Activated naive CD4-positive, alpha-beta T cell treated with anti-CD3 and anti-CD28 coated beads, Interleukin-2, amount 10 ng/mL, durations not matched to agents 7 days and 5 days (primary cell): ENCODE measurements at regions of chr2 and their contacts with region 1.

Region 1: GRCh38 chr2:42095923-42096408 is 48.1 kb downstream of the PKDCC start:
- DNase-seq: peak; percentile 85
- H3K4me3 Mint-ChIP-seq: no peak overlapping the region
- H3K27ac Mint-ChIP-seq: no peak overlapping the region
- H3K4me1 Mint-ChIP-seq: peaks cover 50% of the 10 kb centered on the region
- H3K27me3 Mint-ChIP-seq: peaks cover 21% of the 10 kb centered on the region

Region 2: GRCh38 chr2:41869542-41870264 is 226.3 kb before region 1 on chr2:
- CTCF ChIA-PET with region 1: interaction called, 261 read pairs
- DNase-seq: peak; percentile 79
- H3K4me3 Mint-ChIP-seq: no peak overlapping the region
- H3K27ac Mint-ChIP-seq: no peak overlapping the region
- H3K4me1 Mint-ChIP-seq: peaks cover 2% of the 10 kb centered on the region
- H3K27me3 Mint-ChIP-seq: peaks cover 46% of the 10 kb centered on the region

Region 3: GRCh38 chr2:42169874-42170521 is 74.0 kb after region 1 on chr2:
- CTCF ChIA-PET with region 1: interaction called, 24 read pairs
- DNase-seq: peak; percentile 39
- H3K4me3 Mint-ChIP-seq: no peak overlapping the region
- H3K27ac Mint-ChIP-seq: no peak overlapping the region
- H3K4me1 Mint-ChIP-seq: peaks cover 27% of the 10 kb centered on the region
- H3K27me3 Mint-ChIP-seq: no peaks in the 10 kb centered on the region

Region 4: GRCh38 chr2:42196403-42197267 is 100.7 kb after region 1 on chr2:
- CTCF ChIA-PET with region 1: interaction called, 145 read pairs
- DNase-seq: peak; percentile 57
- H3K4me3 Mint-ChIP-seq: no peak overlapping the region
- H3K27ac Mint-ChIP-seq: peak overlapping the region; percentile 69
- H3K4me1 Mint-ChIP-seq: peaks cover 64% of the 10 kb centered on the region
- H3K27me3 Mint-ChIP-seq: no peaks in the 10 kb centered on the region

Region 5: DNA sequence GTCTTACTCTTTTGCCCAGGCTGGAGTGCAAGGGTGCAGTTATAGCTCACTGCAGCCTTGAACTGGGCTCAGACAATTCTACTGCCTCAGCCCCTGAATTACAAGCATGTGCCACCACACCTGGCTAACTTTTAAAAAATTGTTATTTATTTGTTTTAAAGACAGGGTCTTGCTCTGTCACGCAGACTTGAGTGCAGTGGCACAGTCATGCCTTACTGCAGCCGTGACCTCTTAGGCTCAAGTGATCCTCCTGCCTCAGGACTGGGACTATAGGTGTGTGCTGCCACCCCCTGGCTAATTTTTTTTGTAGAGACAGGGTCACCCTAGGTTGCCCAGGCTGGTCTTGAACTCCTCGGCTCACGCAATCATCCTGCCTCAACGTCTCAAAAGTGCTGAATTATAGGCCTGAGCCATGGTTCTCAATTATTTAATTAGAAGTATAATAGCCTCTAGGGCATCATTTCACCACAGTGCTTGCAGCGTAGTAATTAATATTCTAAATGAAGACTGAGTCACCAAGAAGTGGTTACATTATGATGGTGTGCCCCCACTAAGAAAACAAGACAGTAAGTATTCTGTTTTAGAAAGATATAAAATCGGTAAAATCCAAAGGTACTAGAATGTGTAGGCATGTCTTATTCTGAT is 142.8 kb after region 1 on chr2:
- CTCF ChIA-PET with region 1: interaction called, 13 read pairs
- DNase-seq: peak; percentile 37
- H3K4me3 Mint-ChIP-seq: no peak overlapping the region
- H3K27ac Mint-ChIP-seq: no peak overlapping the region
- H3K4me1 Mint-ChIP-seq: peaks cover 17% of the 10 kb centered on the region
- H3K27me3 Mint-ChIP-seq: no peaks in the 10 kb centered on the region

Region 6: DNA sequence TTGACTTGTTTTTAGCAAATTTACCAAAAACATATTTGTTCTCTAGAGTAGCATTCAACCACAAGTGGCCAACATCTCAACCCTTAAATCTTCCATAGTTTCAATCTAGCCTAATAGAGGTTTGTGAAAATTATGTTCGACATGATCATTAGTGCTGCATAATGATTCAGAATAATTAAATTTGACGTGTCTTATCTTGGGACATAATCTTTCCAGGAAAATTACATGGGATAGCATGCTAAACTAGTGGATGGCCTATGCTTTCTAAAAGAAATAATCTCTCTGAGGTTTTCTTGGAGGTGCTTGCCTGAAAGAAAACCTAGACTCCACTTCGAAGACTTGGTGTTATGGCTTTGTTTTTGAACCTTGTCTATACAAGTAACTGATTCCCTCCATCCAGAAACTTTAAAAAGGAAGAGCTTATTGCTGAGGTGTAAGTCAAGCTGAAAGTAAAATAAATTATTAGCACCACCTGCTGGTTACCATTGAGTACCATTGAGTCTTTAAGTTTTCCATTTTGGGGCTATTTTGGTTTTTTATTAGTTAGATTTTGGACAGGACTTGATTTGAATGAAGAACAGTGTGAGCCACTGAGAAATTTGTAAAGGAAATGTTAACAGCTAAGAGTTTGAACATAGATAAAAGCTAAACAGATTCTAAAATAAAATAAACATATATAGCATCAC is 232.3 kb after region 1 on chr2:
- CTCF ChIA-PET with region 1: interaction called, 66 read pairs
- DNase-seq: no peak
- H3K4me3 Mint-ChIP-seq: no peak overlapping the region
- H3K27ac Mint-ChIP-seq: no peak overlapping the region
- H3K4me1 Mint-ChIP-seq: peaks cover 3% of the 10 kb centered on the region
- H3K27me3 Mint-ChIP-seq: no peaks in the 10 kb centered on the region

Region 7: DNA sequence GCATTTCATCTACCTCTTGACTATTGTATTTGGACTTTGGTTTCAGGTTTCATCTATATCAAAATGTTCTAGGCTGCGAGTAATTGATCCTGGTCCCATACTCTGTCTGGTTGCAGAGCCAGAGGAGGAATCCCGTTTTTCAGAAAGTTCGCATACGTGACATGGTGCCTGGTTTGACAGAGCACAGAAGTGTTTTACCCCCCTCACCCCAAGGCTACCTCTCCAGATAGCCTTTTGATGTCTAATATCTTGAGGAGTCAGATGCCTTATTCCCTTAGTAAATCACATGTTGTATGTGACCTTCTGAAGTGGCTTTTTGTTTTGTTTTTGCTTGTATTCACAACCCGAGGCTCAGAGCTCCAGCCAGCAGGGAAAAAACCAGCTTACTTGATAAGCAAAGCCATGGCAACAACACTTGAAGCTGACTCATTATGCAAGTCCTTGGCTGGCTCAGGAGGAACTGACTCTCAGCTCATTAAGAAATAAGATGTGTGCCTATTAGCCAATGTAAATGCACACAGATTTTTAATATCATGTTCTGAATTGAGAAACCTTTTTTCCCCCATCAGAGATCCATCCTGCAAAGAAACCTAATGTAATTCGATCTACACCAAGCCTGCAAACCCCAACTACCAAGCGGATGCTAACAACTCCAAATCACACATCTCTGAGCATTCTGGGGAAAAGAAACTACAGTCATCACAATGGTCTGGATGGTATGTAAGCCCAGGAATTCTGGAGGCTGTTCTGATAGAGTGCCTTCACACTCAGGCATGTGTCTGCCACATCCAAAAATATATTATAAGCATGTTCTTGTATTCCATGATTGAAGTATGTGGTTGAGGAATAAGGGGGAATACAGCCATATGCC is 626.6 kb after region 1 on chr2:
- CTCF ChIA-PET with region 1: no interaction called
- DNase-seq: no peak
- H3K4me3 Mint-ChIP-seq: no peak overlapping the region
- H3K27ac Mint-ChIP-seq: no peak overlapping the region
- H3K4me1 Mint-ChIP-seq: peaks cover 9% of the 10 kb centered on the region
- H3K27me3 Mint-ChIP-seq: no peaks in the 10 kb centered on the region